Left lung (tissue), 14 donors: ENCODE measurements at regions of chr11 and their contacts with region 1.

Region 1: DNA sequence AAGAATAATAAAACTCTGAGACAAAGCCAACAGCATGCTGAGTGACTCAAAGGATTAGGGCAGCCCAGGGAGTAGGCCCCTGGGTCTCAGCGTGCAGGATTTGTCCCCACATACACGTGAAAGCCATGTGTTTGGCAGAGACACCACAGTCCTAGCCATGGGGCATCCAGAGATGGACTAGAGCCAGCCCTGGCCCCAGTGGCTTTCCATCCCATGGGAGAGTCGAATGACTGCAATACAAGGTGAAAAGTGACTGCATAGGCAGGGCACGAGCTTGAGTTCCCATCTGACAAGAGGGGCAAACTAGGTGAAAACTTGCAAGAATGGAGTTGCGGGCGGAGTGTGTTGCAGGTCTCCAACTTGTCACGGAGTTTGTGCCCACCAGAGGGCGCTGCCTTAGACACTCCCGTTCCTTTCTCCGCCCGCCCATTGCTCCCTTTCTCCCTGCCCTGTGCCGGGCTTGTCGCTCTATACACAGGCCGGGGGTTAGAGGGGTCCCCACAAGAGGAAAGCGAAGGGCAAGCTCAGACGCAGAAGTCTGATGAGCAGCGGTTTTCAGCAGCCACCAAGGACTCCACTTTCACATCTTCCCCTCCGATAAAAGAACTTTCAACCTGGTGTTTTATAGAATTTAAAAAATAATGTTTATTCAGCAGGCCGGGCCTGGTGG is 24.2 kb downstream of the TSKU start:
- DNase-seq: peak; percentile 70 to 93 (median 84)
- ATAC-seq: peak; percentile 87
- H3K4me3 ChIP-seq: no peak overlapping the region
- H3K27ac ChIP-seq: no peak overlapping the region
- H3K4me1 ChIP-seq: peaks cover 5 to 30% of the 10 kb centered on the region in 2 donors
- H3K27me3 ChIP-seq: no peaks in the 10 kb centered on the region
- CTCF ChIP-seq: peak; percentile 74 to 87

Region 2: DNA sequence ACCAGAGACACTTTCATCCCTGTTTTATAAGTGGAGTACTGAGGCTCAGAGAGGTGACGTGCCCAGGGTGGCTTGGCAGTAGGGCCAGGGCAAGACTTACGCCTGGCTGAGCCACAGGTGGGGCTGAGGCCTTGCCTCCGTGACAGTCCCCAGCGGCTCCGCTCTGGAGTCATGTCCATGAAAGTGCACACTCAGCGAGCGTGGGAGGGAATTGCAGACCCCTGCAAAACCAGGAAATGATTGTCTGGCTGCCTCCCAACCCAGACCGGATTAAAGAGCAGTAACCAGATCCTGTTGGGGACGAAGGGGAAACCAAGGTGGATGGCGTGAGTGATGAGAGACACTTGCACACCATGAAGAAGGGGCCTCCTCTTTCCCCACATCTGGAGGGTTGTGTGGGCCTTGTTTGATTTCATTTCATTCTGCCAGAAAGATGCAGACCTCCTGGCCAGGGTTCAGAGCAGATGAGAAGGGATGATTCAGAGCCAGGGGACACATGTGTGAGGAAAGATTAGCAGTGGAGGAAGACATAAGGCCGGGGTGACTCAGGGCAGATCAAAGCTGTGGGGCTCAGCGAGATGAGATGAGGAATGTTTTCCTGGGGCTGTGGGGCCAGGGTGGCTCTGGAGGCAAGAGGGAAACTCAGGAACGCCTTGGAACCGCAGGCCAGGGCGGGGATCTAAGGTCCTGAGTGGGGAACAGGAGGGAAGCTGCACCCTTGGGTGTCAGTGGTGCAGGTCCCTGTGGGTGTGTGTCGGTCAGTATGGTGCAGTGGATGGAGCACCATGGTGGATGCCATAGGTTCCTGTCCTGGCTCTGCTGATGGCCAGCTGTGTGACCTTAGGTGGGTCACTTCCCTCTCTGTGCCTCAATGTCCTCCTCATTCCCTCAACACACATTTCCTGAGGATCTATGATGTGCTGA is 106.9 kb before region 1 on chr11:
- intact Hi-C with region 1: no loop called
- DNase-seq: peak in 2 of 4 donors; percentile 18 to 51
- ATAC-seq: peak; percentile 58
- H3K4me3 ChIP-seq: no peak overlapping the region
- H3K27ac ChIP-seq: no peak overlapping the region
- H3K4me1 ChIP-seq: peaks cover 0 to 19% of the 10 kb centered on the region in 2 donors
- H3K27me3 ChIP-seq: no peaks in the 10 kb centered on the region
- CTCF ChIP-seq: no peak

Region 3: DNA sequence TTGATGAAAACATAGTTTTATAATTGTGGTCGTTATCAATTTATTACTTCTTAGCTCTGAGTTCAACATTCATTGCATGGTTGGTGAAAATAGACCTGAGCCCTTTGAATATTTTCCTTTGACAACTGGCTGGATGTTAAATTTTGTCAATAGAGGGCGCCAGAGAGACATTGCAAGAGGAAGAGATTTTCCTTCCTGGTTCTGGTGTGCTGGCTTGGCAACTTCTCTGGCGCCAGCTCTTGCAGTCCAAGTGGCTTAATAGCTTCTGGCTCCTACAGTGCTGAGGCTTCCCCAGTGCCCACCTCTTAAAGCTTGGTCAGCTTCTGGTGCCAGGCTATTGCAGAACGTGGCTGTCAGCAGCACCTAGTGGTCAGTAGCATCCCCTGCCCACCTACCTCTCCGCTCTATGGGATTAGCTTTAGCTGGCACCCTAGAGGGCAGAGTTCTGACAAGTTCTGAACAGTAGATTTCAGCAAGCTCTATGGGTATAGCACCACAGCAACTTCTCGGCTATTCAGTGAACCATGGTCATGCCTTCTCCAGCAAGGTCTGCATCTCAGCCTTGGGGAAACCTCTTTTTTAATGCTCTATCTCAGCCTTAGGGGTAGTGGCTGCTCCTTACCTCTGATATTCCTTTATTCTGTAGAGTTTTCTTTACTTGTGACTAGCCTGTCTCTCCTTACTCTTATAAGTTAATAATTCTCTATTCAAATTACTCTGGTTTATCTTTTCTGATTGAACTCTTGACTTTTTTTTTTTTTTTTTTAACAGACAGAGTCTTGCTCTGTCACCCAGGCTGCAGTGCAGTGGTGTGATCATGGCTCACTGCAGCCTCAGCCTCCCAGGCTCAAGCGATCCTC is 112.8 kb after region 1 on chr11:
- intact Hi-C with region 1: loop called in 1 of 2 experiments (anchors 5 kb)
- DNase-seq: peak in 3 of 4 donors; percentile 71 to 86 (median 72)
- ATAC-seq: peak; percentile 96
- H3K4me3 ChIP-seq: no peak overlapping the region
- H3K27ac ChIP-seq: no peak overlapping the region
- H3K4me1 ChIP-seq: peaks cover 6 to 23% of the 10 kb centered on the region in 2 donors
- H3K27me3 ChIP-seq: no peaks in the 10 kb centered on the region
- CTCF ChIP-seq: peak; percentile 70 to 89